Mammary epithelial cell (primary cell): ENCODE measurements at regions of chr15 and their contacts with region 1.

Region 1: GRCh38 chr15:52256366-52256765 is 39.2 kb downstream of the MYO5C start:
- DNase-seq: peak; percentile 65
- H3K4me3 ChIP-seq: no peak overlapping the region
- H3K27ac ChIP-seq: no peak overlapping the region
- H3K4me1 ChIP-seq: peaks cover 32% of the 10 kb centered on the region
- H3K27me3 ChIP-seq: no peaks in the 10 kb centered on the region
- CTCF ChIP-seq: peak; percentile 74 to 76

Region 2: GRCh38 chr15:51874751-51875528 is 381.4 kb before region 1 on chr15:
- CTCF ChIA-PET with region 1: no interaction called
- dilution Hi-C with region 1: no loop called
- in situ Hi-C with region 1: no loop called
- intact Hi-C with region 1: no loop called
- DNase-seq: peak; percentile 97
- H3K4me3 ChIP-seq: peak overlapping the region in 1 of 3 experiments; percentile 6
- H3K27ac ChIP-seq: peak overlapping the region; percentile 100
- H3K4me1 ChIP-seq: peaks cover 43% of the 10 kb centered on the region
- H3K27me3 ChIP-seq: no peaks in the 10 kb centered on the region
- CTCF ChIP-seq: no peak

Region 3: GRCh38 chr15:52295421-52296001 is 39.1 kb after region 1 on chr15 and contains the start of gene MYO5C:
- CTCF ChIA-PET with region 1: interaction called, 10 read pairs
- dilution Hi-C with region 1: loop called (anchors 5 kb)
- in situ Hi-C with region 1: no loop called
- intact Hi-C with region 1: no loop called
- DNase-seq: peak; percentile 56
- H3K4me3 ChIP-seq: peak within 1 kb of the TSS; percentile 50 to 61 (median 57)
- H3K27ac ChIP-seq: no peak within 1 kb of the TSS
- H3K4me1 ChIP-seq: peaks cover 11% of the 10 kb centered on the region
- H3K27me3 ChIP-seq: no peaks in the 10 kb centered on the region
- CTCF ChIP-seq: no peak
- total RNA-seq, gene MYO5C: 2.4 to 2.5 TPM

Region 4: DNA sequence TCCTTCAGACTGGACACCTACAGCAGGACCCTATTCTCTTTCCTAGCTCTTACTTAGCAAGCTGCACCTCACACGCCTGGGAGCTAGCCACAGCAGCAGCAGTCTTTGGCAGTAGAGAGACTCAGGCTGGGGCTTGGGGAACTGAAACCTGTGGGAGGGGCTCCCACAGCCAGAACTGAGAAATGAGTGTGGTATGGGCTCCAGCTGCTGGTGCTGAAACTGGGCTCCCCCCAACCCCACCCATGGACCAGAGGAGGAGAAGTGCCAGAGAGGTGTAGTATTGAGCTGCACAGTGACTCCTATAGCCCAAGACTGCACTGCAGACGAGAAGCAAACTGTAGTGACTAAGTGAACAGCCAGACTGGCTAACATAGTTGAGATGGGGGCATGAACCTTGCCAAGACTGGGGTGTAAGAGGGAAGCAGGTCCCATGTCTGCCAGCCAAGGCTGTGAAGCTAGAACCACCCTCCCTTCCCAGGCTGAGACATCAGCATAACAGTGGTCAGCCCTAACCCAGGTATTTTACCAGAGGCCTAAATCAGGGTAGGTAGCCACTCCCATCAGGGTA is 209.9 kb after region 1 on chr15:
- CTCF ChIA-PET with region 1: interaction called, 3 read pairs
- dilution Hi-C with region 1: no loop called
- in situ Hi-C with region 1: no loop called
- intact Hi-C with region 1: loop called (anchors 1 kb)
- DNase-seq: no peak
- H3K4me3 ChIP-seq: no peak overlapping the region
- H3K27ac ChIP-seq: no peak overlapping the region
- H3K4me1 ChIP-seq: peaks cover 8% of the 10 kb centered on the region
- H3K27me3 ChIP-seq: no peaks in the 10 kb centered on the region
- CTCF ChIP-seq: no peak

Region 5: GRCh38 chr15:52679232-52680040 is 423.1 kb after region 1 on chr15 and contains the start of gene ATOSA:
- CTCF ChIA-PET with region 1: no interaction called
- dilution Hi-C with region 1: no loop called
- in situ Hi-C with region 1: no loop called
- intact Hi-C with region 1: loop called (anchors 2 kb)
- DNase-seq: peak; percentile 88
- H3K4me3 ChIP-seq: peak within 1 kb of the TSS; percentile 67 to 99 (median 95)
- H3K27ac ChIP-seq: peak within 1 kb of the TSS; percentile 83
- H3K4me1 ChIP-seq: peaks cover 4% of the 10 kb centered on the region
- H3K27me3 ChIP-seq: no peaks in the 10 kb centered on the region
- CTCF ChIP-seq: peak in 1 of 2 donors; percentile 18
- total RNA-seq, gene ATOSA: 14.4 to 25.3 TPM

Region 6: GRCh38 chr15:52735231-52736089 is 479.1 kb after region 1 on chr15:
- CTCF ChIA-PET with region 1: interaction called, 8 read pairs
- dilution Hi-C with region 1: loop called (anchors 5 kb)
- in situ Hi-C with region 1: loop called in 1 of 2 experiments (anchors 5 kb)
- intact Hi-C with region 1: loop called (anchors 1 kb)
- DNase-seq: peak; percentile 68
- H3K4me3 ChIP-seq: no peak overlapping the region
- H3K27ac ChIP-seq: no peak overlapping the region
- H3K4me1 ChIP-seq: peaks cover 9% of the 10 kb centered on the region
- H3K27me3 ChIP-seq: no peaks in the 10 kb centered on the region
- CTCF ChIP-seq: peak; percentile 70 to 71